ENCODE measurements at regions of chr9 and their contacts with region 1.

Region 1: GRCh38 chr9:15306757-15307534 is at the start of gene TTC39B:
- DNase-seq: peak; percentile 66 to 80 (median 69)
- H3K4me3 ChIP-seq: peak within 1 kb of the TSS; percentile 72
- H3K4me3 Mint-ChIP-seq: peak within 1 kb of the TSS; percentile 94 to 99 (median 98)
- H3K27ac ChIP-seq: peak within 1 kb of the TSS; percentile 74
- H3K27ac Mint-ChIP-seq: peak within 1 kb of the TSS; percentile 74 to 97 (median 96)
- H3K4me1 ChIP-seq: peaks cover 48% of the 10 kb centered on the region
- H3K4me1 Mint-ChIP-seq: peaks cover 38 to 62% (median 50%) of the 10 kb centered on the region in 4 donors
- H3K27me3 ChIP-seq: no peaks in the 10 kb centered on the region
- H3K27me3 Mint-ChIP-seq: no peaks in the 10 kb centered on the region
- total RNA-seq, gene TTC39B: 29.0 to 30.2 TPM

Region 2: DNA sequence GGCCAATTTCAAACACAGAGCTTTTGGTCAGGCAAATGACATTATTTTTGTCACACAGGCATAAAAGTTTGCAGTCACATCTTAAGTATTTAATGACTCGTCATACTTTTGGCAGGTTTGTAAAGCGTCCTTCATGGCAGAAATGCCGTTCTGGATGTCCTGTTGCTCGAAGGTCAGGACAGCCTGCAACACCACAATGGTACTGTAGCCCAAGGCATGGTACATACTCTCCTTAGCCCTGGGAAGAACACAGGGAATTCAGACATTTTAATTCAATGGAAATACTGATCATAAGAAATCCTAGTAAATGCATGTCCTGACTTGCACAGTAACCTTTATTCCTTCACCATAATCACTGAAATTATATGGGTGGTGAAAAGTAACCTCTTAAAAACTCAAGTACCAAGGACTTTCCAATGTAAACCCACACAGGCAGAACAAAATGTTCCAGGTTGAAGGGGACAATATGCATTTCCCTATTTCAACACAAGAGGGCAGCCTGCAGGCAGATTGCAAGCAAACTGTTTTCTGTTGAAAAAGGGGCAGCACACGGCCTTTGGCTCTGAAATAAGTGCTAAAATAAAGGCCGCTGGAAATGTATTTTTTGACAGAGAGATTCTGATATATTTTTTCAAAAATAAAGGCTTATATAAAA is 95.7 kb before region 1 on chr9:
- CTCF ChIA-PET with region 1: interaction called, 70 read pairs
- POLR2A ChIA-PET with region 1: no interaction called
- intact Hi-C with region 1: loop called (anchors 1 kb)
- DNase-seq: peak; percentile 46 to 63 (median 59)
- H3K4me3 ChIP-seq: no peak overlapping the region
- H3K4me3 Mint-ChIP-seq: no peak overlapping the region
- H3K27ac ChIP-seq: no peak overlapping the region
- H3K27ac Mint-ChIP-seq: peak overlapping the region in 1 of 7 donors; percentile 48
- H3K4me1 ChIP-seq: no peaks in the 10 kb centered on the region
- H3K4me1 Mint-ChIP-seq: peaks cover 4 to 10% (median 5%) of the 10 kb centered on the region in 4 donors
- H3K27me3 ChIP-seq: no peaks in the 10 kb centered on the region
- H3K27me3 Mint-ChIP-seq: no peaks in the 10 kb centered on the region

Region 3: DNA sequence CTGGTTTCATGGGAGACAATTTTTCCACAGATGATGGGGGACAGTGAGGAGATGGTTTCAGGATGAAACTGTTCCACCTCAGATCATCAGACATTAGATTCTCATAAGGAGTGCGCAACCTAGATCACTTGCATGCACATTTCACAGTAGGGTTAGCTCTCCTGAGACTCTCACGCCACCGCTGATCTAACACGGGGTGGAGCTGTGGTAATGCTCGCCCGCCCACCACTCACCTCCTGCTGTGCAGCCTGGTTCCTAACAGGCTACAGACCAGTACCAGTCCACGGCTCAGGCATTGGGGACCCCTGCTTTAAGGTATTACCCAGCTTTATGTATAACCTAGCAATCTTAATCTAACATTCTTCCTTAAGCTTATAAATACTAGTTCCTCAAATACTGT is 35.5 kb before region 1 on chr9:
- CTCF ChIA-PET with region 1: interaction called, 48 read pairs
- POLR2A ChIA-PET with region 1: interaction called, 3 read pairs
- intact Hi-C with region 1: no loop called
- DNase-seq: peak in 1 of 5 donors; percentile 8
- H3K4me3 ChIP-seq: no peak overlapping the region
- H3K4me3 Mint-ChIP-seq: no peak overlapping the region
- H3K27ac ChIP-seq: no peak overlapping the region
- H3K27ac Mint-ChIP-seq: peak overlapping the region in 3 of 7 donors; percentile 6 to 50 (median 11)
- H3K4me1 ChIP-seq: peaks cover 6% of the 10 kb centered on the region
- H3K4me1 Mint-ChIP-seq: peaks cover 34 to 52% (median 41%) of the 10 kb centered on the region in 4 donors
- H3K27me3 ChIP-seq: no peaks in the 10 kb centered on the region
- H3K27me3 Mint-ChIP-seq: no peaks in the 10 kb centered on the region

Region 4: GRCh38 chr9:15277400-15278090 is 29.4 kb before region 1 on chr9:
- CTCF ChIA-PET with region 1: interaction called, 48 read pairs
- POLR2A ChIA-PET with region 1: interaction called, 4 read pairs
- intact Hi-C with region 1: loop called (anchors 1 kb)
- DNase-seq: peak in 2 of 5 donors; percentile 27 to 37
- H3K4me3 ChIP-seq: no peak overlapping the region
- H3K4me3 Mint-ChIP-seq: no peak overlapping the region
- H3K27ac ChIP-seq: no peak overlapping the region
- H3K27ac Mint-ChIP-seq: peak overlapping the region in 3 of 7 donors; percentile 2 to 55 (median 48)
- H3K4me1 ChIP-seq: peaks cover 9% of the 10 kb centered on the region
- H3K4me1 Mint-ChIP-seq: peaks cover 26 to 52% (median 32%) of the 10 kb centered on the region in 4 donors
- H3K27me3 ChIP-seq: no peaks in the 10 kb centered on the region
- H3K27me3 Mint-ChIP-seq: no peaks in the 10 kb centered on the region

Region 5: GRCh38 chr9:15286161-15286821 is 20.7 kb before region 1 on chr9:
- CTCF ChIA-PET with region 1: interaction called, 120 read pairs
- POLR2A ChIA-PET with region 1: interaction called, 197 read pairs
- intact Hi-C with region 1: no loop called
- DNase-seq: no peak
- H3K4me3 ChIP-seq: no peak overlapping the region
- H3K4me3 Mint-ChIP-seq: no peak overlapping the region
- H3K27ac ChIP-seq: no peak overlapping the region
- H3K27ac Mint-ChIP-seq: peak overlapping the region in 4 of 7 donors; percentile 22 to 59 (median 34)
- H3K4me1 ChIP-seq: peaks cover 9% of the 10 kb centered on the region
- H3K4me1 Mint-ChIP-seq: peaks cover 25 to 52% (median 32%) of the 10 kb centered on the region in 4 donors
- H3K27me3 ChIP-seq: no peaks in the 10 kb centered on the region
- H3K27me3 Mint-ChIP-seq: no peaks in the 10 kb centered on the region

Region 6: GRCh38 chr9:15295761-15296405 is 11.1 kb before region 1 on chr9:
- CTCF ChIA-PET with region 1: interaction called, 120 read pairs
- POLR2A ChIA-PET with region 1: interaction called, 197 read pairs
- intact Hi-C with region 1: loop called (anchors 1 kb)
- DNase-seq: peak; percentile 40 to 67 (median 57)
- H3K4me3 ChIP-seq: peak overlapping the region; percentile 31 to 46
- H3K4me3 Mint-ChIP-seq: peak overlapping the region; percentile 74 to 89 (median 85)
- H3K27ac ChIP-seq: peak overlapping the region; percentile 84
- H3K27ac Mint-ChIP-seq: peak overlapping the region; percentile 92 to 99 (median 97)
- H3K4me1 ChIP-seq: peaks cover 77% of the 10 kb centered on the region
- H3K4me1 Mint-ChIP-seq: peaks cover 61 to 87% (median 76%) of the 10 kb centered on the region in 4 donors
- H3K27me3 ChIP-seq: no peaks in the 10 kb centered on the region
- H3K27me3 Mint-ChIP-seq: no peaks in the 10 kb centered on the region

Region 7: GRCh38 chr9:15422372-15423230 is 115.7 kb after region 1 on chr9 and contains the start of gene SNAPC3:
- CTCF ChIA-PET with region 1: interaction called, 3 read pairs
- POLR2A ChIA-PET with region 1: interaction called, 12 read pairs
- intact Hi-C with region 1: loop called (anchors 1 kb)
- DNase-seq: peak; percentile 92 to 94 (median 94)
- H3K4me3 ChIP-seq: peak within 1 kb of the TSS; percentile 72 to 98
- H3K4me3 Mint-ChIP-seq: peak within 1 kb of the TSS; percentile 88 to 95 (median 93)
- H3K27ac ChIP-seq: peak within 1 kb of the TSS; percentile 62
- H3K27ac Mint-ChIP-seq: peak within 1 kb of the TSS; percentile 91 to 98 (median 95)
- H3K4me1 ChIP-seq: peaks cover 45% of the 10 kb centered on the region
- H3K4me1 Mint-ChIP-seq: peaks cover 22 to 43% (median 32%) of the 10 kb centered on the region in 4 donors
- H3K27me3 ChIP-seq: no peaks in the 10 kb centered on the region
- H3K27me3 Mint-ChIP-seq: no peaks in the 10 kb centered on the region
- total RNA-seq, gene SNAPC3: 33.3 to 34.2 TPM